Head of caudate nucleus (tissue), 42 donors: ENCODE measurements at regions of chr7 and their contacts with region 1.

Region 1: GRCh38 chr7:47428092-47428767 is 153.7 kb downstream of the TNS3 start:
- DNase-seq: peak in 2 of 42 donors; percentile 15 to 46

Region 2: GRCh38 chr7:47291461-47292081 is 136.7 kb before region 1 on chr7:
- intact Hi-C with region 1: loop called (anchors 10 kb)
- DNase-seq: no peak